CD4-positive, alpha-beta T cell (primary cell): ENCODE measurements at regions of chr12 and their contacts with region 1.

Region 1: GRCh38 chr12:79555028-79555930 is 135.5 kb downstream of the PAWR start:
- DNase-seq: peak in 2 of 14 experiments; percentile 3 to 16
- ATAC-seq: no peak
- H3K4me3 ChIP-seq: no peak overlapping the region
- H3K4me3 Mint-ChIP-seq: no peak overlapping the region
- H3K27ac ChIP-seq: no peak overlapping the region
- H3K27ac Mint-ChIP-seq: no peak overlapping the region
- H3K4me1 ChIP-seq: no peaks in the 10 kb centered on the region
- H3K4me1 Mint-ChIP-seq: no peaks in the 10 kb centered on the region
- H3K27me3 ChIP-seq: no peaks in the 10 kb centered on the region
- H3K27me3 Mint-ChIP-seq: no peaks in the 10 kb centered on the region
- CTCF ChIP-seq: no peak

Region 2: GRCh38 chr12:79566473-79567174 is 11.3 kb after region 1 on chr12:
- CTCF ChIA-PET with region 1: no interaction called
- POLR2A ChIA-PET with region 1: no interaction called
- intact Hi-C with region 1: no loop called
- DNase-seq: no peak
- ATAC-seq: no peak
- H3K4me3 ChIP-seq: no peak overlapping the region
- H3K4me3 Mint-ChIP-seq: no peak overlapping the region
- H3K27ac ChIP-seq: no peak overlapping the region
- H3K27ac Mint-ChIP-seq: no peak overlapping the region
- H3K4me1 ChIP-seq: no peaks in the 10 kb centered on the region
- H3K4me1 Mint-ChIP-seq: no peaks in the 10 kb centered on the region
- H3K27me3 ChIP-seq: no peaks in the 10 kb centered on the region
- H3K27me3 Mint-ChIP-seq: no peaks in the 10 kb centered on the region
- CTCF ChIP-seq: no peak

Region 3: GRCh38 chr12:79597910-79598309 is 42.6 kb after region 1 on chr12:
- CTCF ChIA-PET with region 1: no interaction called
- POLR2A ChIA-PET with region 1: no interaction called
- intact Hi-C with region 1: no loop called
- DNase-seq: no peak
- ATAC-seq: no peak
- H3K4me3 ChIP-seq: no peak overlapping the region
- H3K4me3 Mint-ChIP-seq: no peak overlapping the region
- H3K27ac ChIP-seq: no peak overlapping the region
- H3K27ac Mint-ChIP-seq: no peak overlapping the region
- H3K4me1 ChIP-seq: no peaks in the 10 kb centered on the region
- H3K4me1 Mint-ChIP-seq: no peaks in the 10 kb centered on the region
- H3K27me3 ChIP-seq: no peaks in the 10 kb centered on the region
- H3K27me3 Mint-ChIP-seq: no peaks in the 10 kb centered on the region
- CTCF ChIP-seq: no peak

Region 4: GRCh38 chr12:79681008-79681590 is 125.8 kb after region 1 on chr12:
- CTCF ChIA-PET with region 1: no interaction called
- POLR2A ChIA-PET with region 1: no interaction called
- intact Hi-C with region 1: no loop called
- DNase-seq: no peak
- ATAC-seq: no peak
- H3K4me3 ChIP-seq: no peak overlapping the region
- H3K4me3 Mint-ChIP-seq: no peak overlapping the region
- H3K27ac ChIP-seq: no peak overlapping the region
- H3K27ac Mint-ChIP-seq: no peak overlapping the region
- H3K4me1 ChIP-seq: no peaks in the 10 kb centered on the region
- H3K4me1 Mint-ChIP-seq: no peaks in the 10 kb centered on the region
- H3K27me3 ChIP-seq: peaks cover 2 to 11% of the 10 kb centered on the region in 2 experiments
- H3K27me3 Mint-ChIP-seq: peaks cover 21% of the 10 kb centered on the region
- CTCF ChIP-seq: no peak

Region 5: GRCh38 chr12:79698957-79699356 is 143.7 kb after region 1 on chr12:
- CTCF ChIA-PET with region 1: no interaction called
- POLR2A ChIA-PET with region 1: no interaction called
- intact Hi-C with region 1: no loop called
- DNase-seq: no peak
- ATAC-seq: no peak
- H3K4me3 ChIP-seq: no peak overlapping the region
- H3K4me3 Mint-ChIP-seq: no peak overlapping the region
- H3K27ac ChIP-seq: no peak overlapping the region
- H3K27ac Mint-ChIP-seq: no peak overlapping the region
- H3K4me1 ChIP-seq: no peaks in the 10 kb centered on the region
- H3K4me1 Mint-ChIP-seq: no peaks in the 10 kb centered on the region
- H3K27me3 ChIP-seq: no peaks in the 10 kb centered on the region
- H3K27me3 Mint-ChIP-seq: peaks cover 21% of the 10 kb centered on the region
- CTCF ChIP-seq: no peak

Region 6: GRCh38 chr12:79737875-79738718 is 182.8 kb after region 1 on chr12:
- CTCF ChIA-PET with region 1: no interaction called
- POLR2A ChIA-PET with region 1: no interaction called
- intact Hi-C with region 1: loop called in 1 of 2 experiments (anchors 5 kb)
- DNase-seq: peak in 4 of 14 experiments; percentile 20 to 61 (median 42)
- ATAC-seq: no peak
- H3K4me3 ChIP-seq: no peak overlapping the region
- H3K4me3 Mint-ChIP-seq: no peak overlapping the region
- H3K27ac ChIP-seq: no peak overlapping the region
- H3K27ac Mint-ChIP-seq: no peak overlapping the region
- H3K4me1 ChIP-seq: no peaks in the 10 kb centered on the region
- H3K4me1 Mint-ChIP-seq: no peaks in the 10 kb centered on the region
- H3K27me3 ChIP-seq: peaks cover 0 to 8% of the 10 kb centered on the region in 2 experiments
- H3K27me3 Mint-ChIP-seq: peaks cover 6% of the 10 kb centered on the region
- CTCF ChIP-seq: peak; percentile 77

Region 7: DNA sequence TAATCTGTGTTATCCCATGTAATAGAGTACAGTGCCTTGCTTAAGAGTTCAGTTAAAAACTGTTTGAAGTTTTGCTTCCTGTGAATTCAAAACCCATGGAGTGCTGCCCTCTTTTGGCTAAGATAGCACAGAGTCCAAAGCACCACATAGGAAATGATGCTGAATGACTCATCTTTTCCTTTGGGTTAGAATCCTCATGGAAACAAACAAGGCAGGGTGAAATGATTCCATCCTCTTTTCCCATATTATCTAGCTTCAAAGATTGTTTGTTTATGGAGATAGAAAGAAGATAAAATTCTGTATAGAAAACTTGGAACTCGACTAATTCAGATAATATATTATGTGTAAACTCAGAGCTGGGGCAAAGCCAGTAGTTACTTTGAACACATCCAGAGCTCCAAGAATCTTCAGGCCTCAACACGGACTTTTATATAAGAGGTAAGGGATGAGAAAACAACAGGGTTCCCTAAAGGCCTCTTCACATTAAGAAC is 631.5 kb after region 1 on chr12:
- CTCF ChIA-PET with region 1: no interaction called
- POLR2A ChIA-PET with region 1: no interaction called
- intact Hi-C with region 1: loop called in 1 of 2 experiments (anchors 10 kb)
- DNase-seq: peak in 7 of 14 experiments; percentile 1 to 63 (median 13)
- ATAC-seq: peak; percentile 71
- H3K4me3 ChIP-seq: no peak overlapping the region
- H3K4me3 Mint-ChIP-seq: no peak overlapping the region
- H3K27ac ChIP-seq: no peak overlapping the region
- H3K27ac Mint-ChIP-seq: no peak overlapping the region
- H3K4me1 ChIP-seq: no peaks in the 10 kb centered on the region
- H3K4me1 Mint-ChIP-seq: no peaks in the 10 kb centered on the region
- H3K27me3 ChIP-seq: no peaks in the 10 kb centered on the region
- H3K27me3 Mint-ChIP-seq: peaks cover 5% of the 10 kb centered on the region
- CTCF ChIP-seq: peak; percentile 56

Region 8: GRCh38 chr12:80269803-80270552 is 714.7 kb after region 1 on chr12:
- CTCF ChIA-PET with region 1: no interaction called
- POLR2A ChIA-PET with region 1: no interaction called
- intact Hi-C with region 1: loop called in 1 of 2 experiments (anchors 2 kb)
- DNase-seq: peak in 3 of 14 experiments; percentile 26 to 36 (median 34)
- ATAC-seq: no peak
- H3K4me3 ChIP-seq: no peak overlapping the region
- H3K4me3 Mint-ChIP-seq: no peak overlapping the region
- H3K27ac ChIP-seq: no peak overlapping the region
- H3K27ac Mint-ChIP-seq: no peak overlapping the region
- H3K4me1 ChIP-seq: no peaks in the 10 kb centered on the region
- H3K4me1 Mint-ChIP-seq: no peaks in the 10 kb centered on the region
- H3K27me3 ChIP-seq: no peaks in the 10 kb centered on the region
- H3K27me3 Mint-ChIP-seq: peaks cover 17% of the 10 kb centered on the region
- CTCF ChIP-seq: peak; percentile 71